Activated T-helper 2 cell treated with anti-CD3 and anti-CD28 coated beads, Interferon-gamma antibody, Interleukin-2, Interleukin-4, amounts not matched to agents 10 μg/mL and 5 μg/mL and 100 μg/mL, durations not matched to agents 14 hours and 24 hours and 36 hours (primary cell): ENCODE measurements at regions of chr11 and their contacts with region 1.

Region 1: DNA sequence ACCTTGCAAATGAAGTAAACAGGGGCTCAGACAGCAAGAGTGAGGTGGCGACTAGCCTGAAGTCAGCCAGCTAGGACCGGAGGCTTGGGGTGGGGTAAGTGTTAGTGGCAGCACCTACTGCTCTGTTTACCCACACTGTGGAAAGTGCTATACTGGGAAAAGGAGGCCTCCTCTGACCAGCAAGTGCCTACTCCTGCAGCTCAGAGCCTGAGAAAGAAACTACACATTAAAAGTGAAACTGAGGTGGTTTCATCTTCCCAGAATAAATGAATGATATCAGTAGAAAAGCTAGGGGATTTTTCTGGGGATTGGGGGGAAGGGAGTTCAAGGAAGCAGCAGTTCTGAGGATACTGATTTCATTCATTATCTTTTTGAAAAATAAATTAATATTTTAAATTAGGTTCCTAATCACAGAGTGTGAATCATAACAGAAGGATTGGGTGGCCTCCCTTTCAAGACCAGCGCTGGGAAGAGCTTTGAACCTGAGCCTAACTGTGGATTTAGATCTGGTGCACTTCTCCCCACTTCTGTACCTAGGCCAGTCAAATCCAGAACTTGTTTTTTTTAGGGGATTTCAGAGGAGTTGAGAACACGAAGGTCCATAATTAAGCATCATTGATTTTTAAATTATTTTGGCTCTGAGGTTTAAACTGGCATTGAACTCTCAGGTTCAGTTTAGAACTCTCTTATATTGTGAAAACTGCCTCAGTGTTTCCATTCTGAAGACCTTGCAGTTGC is 48.1 kb upstream of the GRAMD1B start:
- DNase-seq: peak; percentile 47
- H3K4me3 Mint-ChIP-seq: peak overlapping the region; percentile 59
- H3K27ac Mint-ChIP-seq: peak overlapping the region; percentile 50
- H3K4me1 Mint-ChIP-seq: peaks cover 28% of the 10 kb centered on the region
- H3K27me3 Mint-ChIP-seq: no peaks in the 10 kb centered on the region

Region 2: DNA sequence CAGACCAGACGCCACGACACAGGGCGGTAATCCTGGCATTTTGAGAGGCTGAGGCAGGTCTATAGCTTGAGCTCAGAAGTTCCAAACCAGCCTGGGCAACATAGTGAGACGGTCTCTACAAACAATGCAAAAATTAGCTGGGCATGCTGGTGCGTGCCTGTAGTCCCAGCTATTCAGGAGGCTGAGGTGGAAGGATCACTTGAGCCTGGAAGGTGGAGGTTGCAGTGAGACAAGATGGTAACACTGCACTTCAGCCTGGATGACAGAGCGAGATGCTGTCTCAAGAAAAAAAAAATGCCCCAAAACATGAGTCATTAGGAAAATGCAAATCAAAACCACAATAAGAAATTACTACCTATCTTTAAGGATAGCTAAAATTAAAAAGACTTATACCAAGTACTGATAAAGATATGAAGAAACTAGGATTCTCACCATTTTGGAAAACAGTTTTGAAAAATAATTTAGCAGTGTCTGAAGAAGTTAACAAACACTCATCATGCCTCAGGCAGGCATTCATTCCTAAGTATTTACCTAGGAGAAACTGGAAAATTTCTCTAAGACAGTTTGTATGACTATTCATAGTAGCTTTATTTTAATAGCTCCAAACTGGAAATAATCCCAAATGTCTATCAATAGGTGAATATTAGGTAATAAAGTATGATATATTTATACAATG is 43.5 kb before region 1 on chr11:
- intact Hi-C with region 1: loop called (anchors 1 kb)
- DNase-seq: no peak
- H3K4me3 Mint-ChIP-seq: no peak overlapping the region
- H3K27ac Mint-ChIP-seq: no peak overlapping the region
- H3K4me1 Mint-ChIP-seq: peaks cover 15% of the 10 kb centered on the region
- H3K27me3 Mint-ChIP-seq: peaks cover 6% of the 10 kb centered on the region

Region 3: GRCh38 chr11:123392844-123393243 is 10.9 kb after region 1 on chr11:
- intact Hi-C with region 1: loop called (anchors 1 kb)
- DNase-seq: no peak
- H3K4me3 Mint-ChIP-seq: no peak overlapping the region
- H3K27ac Mint-ChIP-seq: peak overlapping the region; percentile 57
- H3K4me1 Mint-ChIP-seq: peaks cover 43% of the 10 kb centered on the region
- H3K27me3 Mint-ChIP-seq: no peaks in the 10 kb centered on the region

Region 4: DNA sequence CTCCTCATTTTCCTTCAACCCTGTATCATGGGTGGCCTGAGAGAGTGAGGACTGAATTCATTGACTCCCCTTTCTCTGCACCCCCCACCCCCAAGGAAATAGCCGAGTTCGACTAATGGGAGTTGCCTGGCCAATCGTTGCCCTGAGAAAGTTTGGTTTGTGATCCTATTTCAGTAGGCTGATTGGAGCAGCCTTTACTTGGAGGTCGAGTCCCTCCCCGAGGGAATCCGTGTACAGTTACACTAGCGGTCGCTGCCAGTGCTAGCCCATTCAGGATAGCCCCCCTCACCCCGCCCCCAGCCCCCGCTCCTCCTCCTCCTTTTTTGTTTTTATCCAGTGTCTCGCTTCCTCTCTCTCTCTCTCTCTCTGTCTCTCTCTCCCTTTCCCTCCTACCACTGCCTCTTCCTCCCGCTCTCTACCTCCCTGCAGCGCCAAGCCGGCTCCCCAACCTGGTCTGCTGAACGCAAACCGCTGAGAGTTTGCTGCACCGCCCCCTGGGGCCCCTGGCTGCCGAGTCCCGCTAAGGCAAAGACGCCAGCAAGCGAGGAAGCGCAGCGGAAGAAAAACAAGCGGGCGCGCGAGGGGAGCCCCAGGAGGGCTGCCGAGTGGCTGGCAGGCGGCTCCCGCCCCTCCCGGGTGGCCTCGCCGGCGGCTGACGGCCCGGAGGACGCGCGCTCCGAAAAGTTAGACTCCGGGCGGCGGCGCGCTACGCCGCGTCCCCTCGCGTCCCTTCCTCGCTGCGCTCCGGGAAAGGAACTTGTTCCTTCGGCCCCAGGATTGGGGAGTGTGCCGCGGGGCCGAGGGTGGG is 48.1 kb after region 1 on chr11 and contains the start of gene GRAMD1B:
- intact Hi-C with region 1: loop called (anchors 2 kb)
- DNase-seq: peak; percentile 80
- H3K4me3 Mint-ChIP-seq: peak within 1 kb of the TSS; percentile 91
- H3K27ac Mint-ChIP-seq: peak within 1 kb of the TSS; percentile 86
- H3K4me1 Mint-ChIP-seq: peaks cover 44% of the 10 kb centered on the region
- H3K27me3 Mint-ChIP-seq: no peaks in the 10 kb centered on the region
- total RNA-seq, gene GRAMD1B: 159 and 166 TPM in 2 replicates

Region 5: DNA sequence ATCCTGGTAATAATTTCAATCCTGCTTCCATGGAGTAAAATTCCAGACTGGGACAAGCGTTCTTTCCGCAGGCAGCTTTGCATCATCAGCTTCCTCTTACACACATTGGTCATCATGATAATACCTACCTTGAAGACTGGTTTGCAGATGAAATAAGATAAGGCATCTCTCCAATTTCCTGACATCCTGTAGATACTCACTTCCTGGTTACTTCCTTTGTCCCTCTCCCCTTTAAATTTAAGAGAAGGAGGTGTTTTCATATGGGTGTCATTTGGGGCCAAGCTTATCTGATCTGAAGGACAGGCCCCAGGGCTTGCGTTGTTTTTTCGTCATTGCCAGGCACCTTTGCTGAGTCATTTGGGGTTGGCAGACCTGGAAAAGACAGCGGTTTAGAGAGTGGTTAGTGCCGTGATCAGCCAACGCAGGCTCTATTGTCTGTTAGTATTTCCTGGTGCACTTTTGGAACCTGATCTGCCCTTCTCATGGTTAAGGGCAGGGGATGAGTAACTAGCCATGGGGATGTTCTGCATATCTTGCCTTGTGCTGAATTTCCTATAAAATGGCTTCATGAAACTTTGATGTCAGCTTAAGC is 72.2 kb after region 1 on chr11:
- intact Hi-C with region 1: loop called (anchors 1 kb)
- DNase-seq: peak; percentile 73
- H3K4me3 Mint-ChIP-seq: peak overlapping the region; percentile 84
- H3K27ac Mint-ChIP-seq: peak overlapping the region; percentile 97
- H3K4me1 Mint-ChIP-seq: peaks cover 88% of the 10 kb centered on the region
- H3K27me3 Mint-ChIP-seq: no peaks in the 10 kb centered on the region